Mammary epithelial cell (primary cell): ENCODE measurements at regions of chr17 and their contacts with region 1.

Region 1: GRCh38 chr17:74176546-74177001 is 26.9 kb upstream of the RPL38 start:
- DNase-seq: peak; percentile 52
- H3K4me3 ChIP-seq: no peak overlapping the region
- H3K27ac ChIP-seq: no peak overlapping the region
- H3K4me1 ChIP-seq: no peaks in the 10 kb centered on the region
- H3K27me3 ChIP-seq: no peaks in the 10 kb centered on the region
- CTCF ChIP-seq: peak; percentile 83 to 91

Region 2: GRCh38 chr17:73192894-73193701 is 983.5 kb before region 1 on chr17 and contains the start of gene COG1:
- CTCF ChIA-PET with region 1: no interaction called
- dilution Hi-C with region 1: no loop called
- in situ Hi-C with region 1: no loop called
- intact Hi-C with region 1: loop called (anchors 2 kb)
- DNase-seq: peak; percentile 86
- H3K4me3 ChIP-seq: peak within 1 kb of the TSS; percentile 73 to 96 (median 80)
- H3K27ac ChIP-seq: peak within 1 kb of the TSS; percentile 57
- H3K4me1 ChIP-seq: peaks cover 4% of the 10 kb centered on the region
- H3K27me3 ChIP-seq: no peaks in the 10 kb centered on the region
- CTCF ChIP-seq: no peak
- total RNA-seq, gene COG1: 23.3 to 35.2 TPM

Region 3: GRCh38 chr17:73371285-73371684 is 805.3 kb before region 1 on chr17:
- CTCF ChIA-PET with region 1: no interaction called
- dilution Hi-C with region 1: no loop called
- in situ Hi-C with region 1: no loop called
- intact Hi-C with region 1: loop called (anchors 2 kb)
- DNase-seq: peak; percentile 71
- H3K4me3 ChIP-seq: no peak overlapping the region
- H3K27ac ChIP-seq: no peak overlapping the region
- H3K4me1 ChIP-seq: peaks cover 6% of the 10 kb centered on the region
- H3K27me3 ChIP-seq: no peaks in the 10 kb centered on the region
- CTCF ChIP-seq: no peak

Region 4: DNA sequence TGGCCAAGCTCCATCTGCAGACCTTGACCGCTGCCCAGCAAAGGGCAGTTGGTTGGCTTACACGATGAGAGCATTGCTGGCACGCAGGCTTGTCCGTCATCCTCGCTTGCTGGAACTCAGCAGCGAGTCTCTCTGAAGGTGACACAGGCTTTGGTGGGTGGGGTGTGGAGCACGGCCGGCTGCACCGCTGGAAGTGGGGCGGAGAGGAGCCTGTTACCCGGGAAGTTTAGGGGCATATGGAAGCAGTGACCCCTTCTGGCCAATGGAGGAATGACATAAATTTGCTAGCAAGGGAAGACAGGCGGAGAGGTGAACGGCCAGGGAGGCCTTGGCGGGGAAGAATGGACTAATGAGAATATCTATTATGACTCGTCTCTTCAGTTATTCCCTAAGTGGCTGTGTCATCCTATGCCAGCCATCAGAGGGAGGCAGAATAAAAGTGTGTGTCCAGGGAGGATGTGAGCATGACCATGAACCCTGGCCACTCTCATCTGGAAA is 466.4 kb before region 1 on chr17:
- CTCF ChIA-PET with region 1: no interaction called
- dilution Hi-C with region 1: no loop called
- in situ Hi-C with region 1: no loop called
- intact Hi-C with region 1: loop called (anchors 1 kb)
- DNase-seq: peak; percentile 61
- H3K4me3 ChIP-seq: no peak overlapping the region
- H3K27ac ChIP-seq: no peak overlapping the region
- H3K4me1 ChIP-seq: peaks cover 25% of the 10 kb centered on the region
- H3K27me3 ChIP-seq: no peaks in the 10 kb centered on the region
- CTCF ChIP-seq: peak; percentile 81 to 86

Region 5: GRCh38 chr17:73820686-73821448 is 355.7 kb before region 1 on chr17:
- CTCF ChIA-PET with region 1: no interaction called
- dilution Hi-C with region 1: no loop called
- in situ Hi-C with region 1: no loop called
- intact Hi-C with region 1: no loop called
- DNase-seq: no peak
- H3K4me3 ChIP-seq: no peak overlapping the region
- H3K27ac ChIP-seq: no peak overlapping the region
- H3K4me1 ChIP-seq: no peaks in the 10 kb centered on the region
- H3K27me3 ChIP-seq: no peaks in the 10 kb centered on the region
- CTCF ChIP-seq: no peak

Region 6: GRCh38 chr17:74089869-74090464 is 86.6 kb before region 1 on chr17:
- CTCF ChIA-PET with region 1: no interaction called
- dilution Hi-C with region 1: no loop called
- in situ Hi-C with region 1: no loop called
- intact Hi-C with region 1: loop called (anchors 1 kb)
- DNase-seq: peak; percentile 40
- H3K4me3 ChIP-seq: no peak overlapping the region
- H3K27ac ChIP-seq: no peak overlapping the region
- H3K4me1 ChIP-seq: no peaks in the 10 kb centered on the region
- H3K27me3 ChIP-seq: no peaks in the 10 kb centered on the region
- CTCF ChIP-seq: peak; percentile 70 to 79